ENCODE measurements at regions of chr1 and their contacts with region 1.

Region 1: DNA sequence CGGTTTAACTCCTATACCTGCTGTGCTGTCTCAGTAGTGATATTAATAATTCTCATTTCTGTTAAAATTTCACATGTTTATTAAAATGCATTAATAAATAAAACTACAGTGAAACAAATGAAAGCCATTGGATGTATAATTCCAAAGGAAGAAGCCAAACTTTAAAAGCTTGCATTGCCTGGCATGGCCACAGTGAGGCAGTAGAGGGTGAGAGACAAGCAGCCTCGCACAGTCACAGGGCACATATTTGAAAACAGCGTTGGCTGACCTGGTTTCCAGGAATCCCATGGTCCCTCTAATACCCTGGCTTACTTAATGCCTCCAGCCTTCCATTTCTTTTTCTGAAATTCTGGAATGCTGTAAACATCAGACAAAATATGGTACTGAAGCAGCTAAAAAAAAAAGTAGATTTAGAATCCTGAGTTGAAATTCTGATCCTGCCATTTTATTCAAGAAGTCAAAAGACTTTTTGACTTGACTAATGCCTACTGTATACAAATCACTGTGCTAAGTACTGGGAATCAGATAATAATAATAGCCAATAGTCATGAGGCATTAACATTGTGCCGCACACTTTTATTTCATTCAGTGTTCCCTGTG is 6.7 kb upstream of the RNASEL start:
- DNase-seq: peak; percentile 79
- ATAC-seq: peak; percentile 80
- H3K4me3 Mint-ChIP-seq: no peak overlapping the region
- H3K27ac Mint-ChIP-seq: no peak overlapping the region
- H3K4me1 Mint-ChIP-seq: peaks cover 16% of the 10 kb centered on the region
- H3K27me3 Mint-ChIP-seq: no peaks in the 10 kb centered on the region
- CTCF ChIP-seq: peak; percentile 92

Region 2: GRCh38 chr1:182374101-182374834 is 221.5 kb before region 1 on chr1:
- CTCF ChIA-PET with region 1: no interaction called
- POLR2A ChIA-PET with region 1: no interaction called
- intact Hi-C with region 1: no loop called
- DNase-seq: no peak
- ATAC-seq: no peak
- H3K4me3 Mint-ChIP-seq: no peak overlapping the region
- H3K27ac Mint-ChIP-seq: no peak overlapping the region
- H3K4me1 Mint-ChIP-seq: no peaks in the 10 kb centered on the region
- H3K27me3 Mint-ChIP-seq: peaks cover 3% of the 10 kb centered on the region
- CTCF ChIP-seq: no peak

Region 3: GRCh38 chr1:182580736-182581135 is 15.0 kb before region 1 on chr1:
- CTCF ChIA-PET with region 1: interaction called, 24 read pairs
- POLR2A ChIA-PET with region 1: interaction called, 3 read pairs
- intact Hi-C with region 1: no loop called
- DNase-seq: no peak
- ATAC-seq: no peak
- H3K4me3 Mint-ChIP-seq: no peak overlapping the region
- H3K27ac Mint-ChIP-seq: no peak overlapping the region
- H3K4me1 Mint-ChIP-seq: peaks cover 39% of the 10 kb centered on the region
- H3K27me3 Mint-ChIP-seq: no peaks in the 10 kb centered on the region
- CTCF ChIP-seq: no peak

Region 4: GRCh38 chr1:182622901-182623528 is 27.3 kb after region 1 on chr1:
- CTCF ChIA-PET with region 1: interaction called, 13 read pairs
- POLR2A ChIA-PET with region 1: interaction called, 6 read pairs
- intact Hi-C with region 1: no loop called
- DNase-seq: no peak
- ATAC-seq: no peak
- H3K4me3 Mint-ChIP-seq: no peak overlapping the region
- H3K27ac Mint-ChIP-seq: no peak overlapping the region
- H3K4me1 Mint-ChIP-seq: peaks cover 79% of the 10 kb centered on the region
- H3K27me3 Mint-ChIP-seq: peaks cover 16% of the 10 kb centered on the region
- CTCF ChIP-seq: no peak

Region 5: GRCh38 chr1:182716740-182717720 is 121.3 kb after region 1 on chr1:
- CTCF ChIA-PET with region 1: interaction called, 23 read pairs
- POLR2A ChIA-PET with region 1: interaction called, 5 read pairs
- intact Hi-C with region 1: loop called (anchors 5 kb)
- DNase-seq: peak; percentile 11
- ATAC-seq: peak; percentile 24
- H3K4me3 Mint-ChIP-seq: no peak overlapping the region
- H3K27ac Mint-ChIP-seq: peak overlapping the region; percentile 61
- H3K4me1 Mint-ChIP-seq: peaks cover 55% of the 10 kb centered on the region
- H3K27me3 Mint-ChIP-seq: peaks cover 3% of the 10 kb centered on the region
- CTCF ChIP-seq: no peak

Region 6: GRCh38 chr1:182768963-182769362 is 173.2 kb after region 1 on chr1:
- CTCF ChIA-PET with region 1: interaction called, 19 read pairs
- POLR2A ChIA-PET with region 1: no interaction called
- intact Hi-C with region 1: no loop called
- DNase-seq: no peak
- ATAC-seq: no peak
- H3K4me3 Mint-ChIP-seq: no peak overlapping the region
- H3K27ac Mint-ChIP-seq: no peak overlapping the region
- H3K4me1 Mint-ChIP-seq: no peaks in the 10 kb centered on the region
- H3K27me3 Mint-ChIP-seq: peaks cover 21% of the 10 kb centered on the region
- CTCF ChIP-seq: no peak